Dorsolateral prefrontal cortex (tissue), 120 donors: ENCODE measurements at regions of chrX and their contacts with region 1.

Region 1: GRCh38 chrX:118595501-118596042 is 100.0 kb downstream of the DOCK11 start:
- DNase-seq: no peak
- H3K4me3 ChIP-seq: no peak overlapping the region
- H3K27ac ChIP-seq: no peak overlapping the region
- H3K27me3 ChIP-seq: peaks cover 0 to 75% (median 16%) of the 10 kb centered on the region in 45 donors
- CTCF ChIP-seq: no peak

Region 2: GRCh38 chrX:118495061-118495921 is 100.3 kb before region 1 on chrX and contains the start of gene DOCK11:
- intact Hi-C with region 1: loop called in 1 of 2 experiments (anchors 10 kb)
- DNase-seq: peak; percentile 32 to 67 (median 50)
- H3K4me3 ChIP-seq: peak within 1 kb of the TSS; percentile 41 to 80 (median 66)
- H3K27ac ChIP-seq: peak within 1 kb of the TSS in 55 of 59 donors; percentile 15 to 86 (median 71)
- H3K27me3 ChIP-seq: peaks cover 0 to 75% (median 11%) of the 10 kb centered on the region in 45 donors
- CTCF ChIP-seq: peak in 2 of 56 donors; percentile 12 to 14
- total RNA-seq, gene DOCK11: 3.3 to 16.6 (median 7.7) TPM

Region 3: GRCh38 chrX:118577041-118577440 is 18.5 kb before region 1 on chrX:
- intact Hi-C with region 1: no loop called
- DNase-seq: peak in 1 of 10 donors; percentile 67
- H3K4me3 ChIP-seq: no peak overlapping the region
- H3K27ac ChIP-seq: no peak overlapping the region
- H3K27me3 ChIP-seq: peaks cover 0 to 61% (median 7%) of the 10 kb centered on the region in 45 donors
- CTCF ChIP-seq: no peak

Region 4: DNA sequence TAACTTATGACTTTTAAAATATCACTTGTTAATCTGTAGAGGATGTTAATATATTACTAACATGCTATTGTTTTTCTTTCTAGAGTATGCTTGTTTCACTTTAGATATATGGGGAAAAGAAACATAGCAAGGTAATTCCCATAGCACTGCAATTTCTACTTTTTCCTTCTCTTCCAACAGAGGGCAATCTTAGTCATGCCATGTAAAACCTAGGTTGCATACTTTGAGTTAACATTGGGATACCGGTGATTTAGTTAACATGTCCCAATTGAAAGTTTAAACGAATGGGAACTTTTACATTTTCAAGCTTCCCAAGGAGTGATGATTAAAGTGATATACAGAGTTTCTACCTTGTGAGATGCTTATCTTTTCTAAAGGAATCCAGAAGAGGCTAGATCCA is 42.4 kb after region 1 on chrX:
- intact Hi-C with region 1: no loop called
- DNase-seq: no peak
- H3K4me3 ChIP-seq: no peak overlapping the region
- H3K27ac ChIP-seq: no peak overlapping the region
- H3K27me3 ChIP-seq: peaks cover 0 to 54% (median 5%) of the 10 kb centered on the region in 45 donors
- CTCF ChIP-seq: peak in 17 of 56 donors; percentile 4 to 45 (median 16)